ENCODE measurements at regions of chr14 and their contacts with region 1.

Region 1: GRCh38 chr14:76918751-76919543 is 92.7 kb downstream of the LRRC74A start:
- DNase-seq: peak; percentile 95
- H3K4me3 ChIP-seq: peak overlapping the region; percentile 29
- H3K27ac ChIP-seq: peak overlapping the region; percentile 95
- H3K4me1 ChIP-seq: peaks cover 68% of the 10 kb centered on the region
- H3K27me3 ChIP-seq: no peaks in the 10 kb centered on the region
- CTCF ChIP-seq: peak; percentile 24

Region 2: DNA sequence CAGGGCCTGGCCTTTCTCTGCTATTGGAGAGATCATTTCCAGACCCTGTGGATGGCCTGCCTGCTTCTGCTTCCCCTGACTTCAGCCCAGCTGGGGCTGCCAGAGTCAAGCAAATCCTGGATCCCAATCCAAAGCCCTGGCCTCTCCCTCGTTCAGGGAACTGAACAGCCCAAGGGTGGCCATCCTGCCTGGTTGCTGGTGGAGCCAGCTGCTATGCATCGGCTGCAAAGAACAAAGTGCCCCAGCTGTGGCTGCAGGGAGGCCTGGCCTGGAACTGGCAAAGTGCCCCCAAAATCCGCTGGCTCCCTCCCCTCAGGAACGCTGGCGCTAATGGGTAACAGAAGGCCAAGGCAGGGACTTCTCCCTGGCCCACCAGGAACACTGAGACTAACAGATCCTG is 36.3 kb before region 1 on chr14:
- intact Hi-C with region 1: no loop called
- DNase-seq: no peak
- H3K4me3 ChIP-seq: no peak overlapping the region
- H3K27ac ChIP-seq: no peak overlapping the region
- H3K4me1 ChIP-seq: peaks cover 43% of the 10 kb centered on the region
- H3K27me3 ChIP-seq: no peaks in the 10 kb centered on the region
- CTCF ChIP-seq: no peak

Region 3: DNA sequence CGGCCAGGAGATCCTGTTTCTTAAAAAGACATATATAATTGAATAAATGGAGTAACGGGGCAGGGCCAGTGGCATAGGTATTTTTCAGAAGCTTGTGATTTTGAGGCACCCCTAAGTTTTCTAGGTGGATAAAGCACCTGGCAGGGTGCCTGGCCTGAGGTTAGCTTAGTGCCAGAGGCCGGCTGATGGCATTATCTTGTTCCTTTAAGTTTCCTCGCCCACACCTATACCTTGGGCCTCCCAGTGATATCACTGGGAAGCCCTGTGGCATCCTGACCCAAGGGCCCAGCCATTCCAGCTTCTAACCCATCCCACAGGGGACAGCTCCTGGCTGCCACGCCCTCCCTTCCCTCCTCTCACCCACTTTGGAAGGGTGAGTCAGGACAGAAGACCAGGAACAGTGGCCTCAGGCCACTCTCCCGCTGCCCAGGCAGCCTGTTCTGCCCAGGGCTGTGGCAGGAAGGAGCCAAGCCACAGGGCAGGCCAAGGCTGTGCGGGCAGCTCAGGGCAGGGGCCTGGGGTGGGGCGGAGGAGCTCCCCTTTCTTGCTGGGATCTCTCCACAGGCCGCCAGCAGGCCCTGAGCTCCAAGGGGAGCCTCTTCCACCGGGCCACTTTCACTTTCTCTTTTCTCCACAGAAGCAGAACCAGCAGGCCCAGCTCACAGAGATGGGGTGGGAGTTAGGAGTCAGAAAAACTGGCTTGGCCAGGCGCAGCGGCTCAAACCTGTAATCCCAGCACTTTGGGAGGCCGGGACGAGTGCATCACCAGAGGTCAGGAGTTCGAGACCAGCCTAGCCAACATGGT is 34.5 kb after region 1 on chr14:
- intact Hi-C with region 1: loop called (anchors 5 kb)
- DNase-seq: peak; percentile 59
- H3K4me3 ChIP-seq: peak overlapping the region; percentile 48
- H3K27ac ChIP-seq: peak overlapping the region; percentile 96
- H3K4me1 ChIP-seq: peaks cover 85% of the 10 kb centered on the region
- H3K27me3 ChIP-seq: no peaks in the 10 kb centered on the region
- CTCF ChIP-seq: no peak

Region 4: GRCh38 chr14:77097700-77098528 is 179.0 kb after region 1 on chr14 and contains the start of gene CIPC:
- intact Hi-C with region 1: no loop called
- DNase-seq: peak; percentile 100
- H3K4me3 ChIP-seq: peak within 1 kb of the TSS; percentile 84
- H3K27ac ChIP-seq: peak within 1 kb of the TSS; percentile 98
- H3K4me1 ChIP-seq: peaks cover 64% of the 10 kb centered on the region
- H3K27me3 ChIP-seq: no peaks in the 10 kb centered on the region
- CTCF ChIP-seq: no peak
- total RNA-seq, gene CIPC: 70.3 TPM

Measured in left ventricle myocardium inferior (tissue), 1 donor.